ENCODE measurements at regions of chr2 and their contacts with region 1.

Region 1: DNA sequence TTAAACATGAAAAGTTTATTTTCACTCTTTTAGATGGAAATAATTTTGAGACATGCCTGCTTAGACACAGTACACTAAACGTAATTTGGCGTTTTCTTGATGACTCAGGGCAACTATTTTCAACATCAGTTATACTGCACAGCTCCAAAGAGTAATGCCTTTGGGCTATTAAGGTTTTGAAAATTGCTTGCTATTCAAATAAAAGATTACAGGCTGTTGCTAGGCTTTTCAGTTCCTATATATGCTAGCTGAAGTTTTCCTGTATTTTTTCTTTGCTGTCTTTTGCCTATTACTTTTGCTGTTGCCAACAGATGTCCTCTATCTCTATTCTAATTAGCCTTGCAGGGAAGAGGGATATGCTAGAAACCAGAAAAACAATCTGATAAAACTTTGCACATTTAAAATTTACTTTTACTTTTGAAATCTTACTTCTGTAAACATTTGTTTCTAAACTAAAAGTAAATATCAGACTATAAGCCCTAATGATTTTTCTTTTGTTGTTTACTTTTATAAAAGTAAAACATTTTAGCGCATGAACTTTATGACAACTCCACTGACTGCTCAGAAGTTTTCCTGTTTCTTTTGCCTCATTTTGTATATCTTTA is 113.4 kb upstream of the WDSUB1 start:
- DNase-seq: no peak
- ATAC-seq: no peak
- H3K4me3 ChIP-seq: no peak overlapping the region
- H3K27ac ChIP-seq: no peak overlapping the region
- H3K4me1 ChIP-seq: no peaks in the 10 kb centered on the region
- H3K27me3 ChIP-seq: no peaks in the 10 kb centered on the region
- CTCF ChIP-seq: no peak
- EP300 ChIP-seq: no peak
- POLR2A ChIP-seq: no peak
- RAD21 ChIP-seq: no peak

Region 2: DNA sequence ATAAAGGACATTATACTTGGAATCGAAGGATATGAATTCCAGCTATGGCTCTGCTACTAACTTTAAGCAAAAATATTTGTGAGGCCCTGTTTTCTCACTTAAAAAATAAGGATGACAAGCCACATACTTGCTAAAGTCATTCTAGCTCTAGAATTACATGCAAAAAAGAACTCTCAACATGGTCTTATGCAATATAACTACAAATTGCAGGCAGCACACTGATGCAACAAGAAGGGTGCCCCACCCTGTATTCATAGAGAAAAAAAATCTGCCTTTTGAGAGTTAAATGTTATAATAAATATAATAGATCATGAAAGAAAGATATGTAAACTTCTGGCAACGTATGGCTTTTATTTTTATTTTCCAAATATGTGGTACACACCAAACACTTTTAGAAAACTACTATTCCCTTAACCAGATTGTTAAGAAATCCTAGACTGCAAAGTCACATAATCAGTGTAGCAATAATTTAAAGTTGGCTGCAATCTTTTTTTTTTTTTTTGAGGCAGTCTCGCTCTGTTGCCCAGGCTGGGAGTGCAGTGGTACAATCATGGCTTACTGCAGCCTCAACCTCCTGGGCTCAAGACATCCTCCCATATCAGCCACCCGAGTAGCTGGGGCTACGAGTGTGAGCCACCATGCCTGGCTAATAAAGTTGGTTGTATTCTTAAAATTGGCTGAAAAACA is 73.2 kb before region 1 on chr2:
- CTCF ChIA-PET with region 1: no interaction called
- POLR2A ChIA-PET with region 1: no interaction called
- RAD21 ChIA-PET with region 1: no interaction called
- SMC1A ChIA-PET with region 1: no interaction called
- in situ Hi-C with region 1: no loop called
- intact Hi-C with region 1: loop called (anchors 2 kb)
- DNase-seq: no peak
- ATAC-seq: no peak
- H3K4me3 ChIP-seq: no peak overlapping the region
- H3K27ac ChIP-seq: no peak overlapping the region
- H3K4me1 ChIP-seq: no peaks in the 10 kb centered on the region
- H3K27me3 ChIP-seq: no peaks in the 10 kb centered on the region
- CTCF ChIP-seq: no peak
- EP300 ChIP-seq: no peak
- POLR2A ChIP-seq: no peak
- RAD21 ChIP-seq: no peak